PC-9 (cell line): ENCODE measurements at regions of chr15 and their contacts with region 1.

Region 1: DNA sequence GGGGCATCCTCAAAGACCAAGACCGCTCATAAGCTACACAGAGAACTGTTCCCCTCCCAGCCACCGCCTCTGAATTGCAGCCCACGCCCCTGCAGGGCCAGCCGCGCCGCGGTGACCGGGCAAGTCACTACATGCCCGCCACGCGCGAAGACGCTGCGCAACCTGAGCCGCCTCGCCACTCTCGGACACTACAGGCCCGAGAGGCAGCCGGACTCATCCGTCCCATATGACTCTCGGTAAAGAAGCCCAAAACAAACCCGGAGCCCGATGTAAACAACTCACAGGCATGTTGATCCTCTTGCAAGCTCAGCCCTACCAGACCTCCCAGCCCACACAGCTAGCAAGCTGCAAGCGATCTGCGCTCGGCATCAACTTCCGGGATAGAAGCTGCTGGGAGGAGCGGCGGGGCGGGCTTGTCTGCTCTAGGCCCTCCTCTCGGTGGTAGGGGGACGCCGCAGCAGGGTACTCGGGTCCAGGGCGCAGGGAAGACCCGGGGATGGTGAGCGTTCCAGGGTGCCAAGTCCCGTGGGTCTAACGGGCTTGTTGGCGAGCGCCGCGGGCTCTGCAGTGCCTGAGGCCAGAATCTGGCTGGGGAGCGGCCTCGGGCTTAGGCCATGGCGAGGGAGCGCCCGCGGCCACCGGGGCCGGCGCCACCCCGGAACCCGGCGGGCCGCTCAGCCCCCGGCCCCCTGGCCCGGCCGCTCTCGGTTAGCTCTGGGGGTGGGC is at the start of gene RPS27L:
- DNase-seq: peak; percentile 75 to 84
- H3K4me3 ChIP-seq: peak within 1 kb of the TSS; percentile 71
- H3K27ac ChIP-seq: peak within 1 kb of the TSS; percentile 61
- H3K4me1 ChIP-seq: peaks cover 13% of the 10 kb centered on the region
- H3K27me3 ChIP-seq: no peaks in the 10 kb centered on the region
- CTCF ChIP-seq: no peak
- total RNA-seq, gene RPS27L: 59.7 and 77.0 TPM in 2 replicates

Region 2: DNA sequence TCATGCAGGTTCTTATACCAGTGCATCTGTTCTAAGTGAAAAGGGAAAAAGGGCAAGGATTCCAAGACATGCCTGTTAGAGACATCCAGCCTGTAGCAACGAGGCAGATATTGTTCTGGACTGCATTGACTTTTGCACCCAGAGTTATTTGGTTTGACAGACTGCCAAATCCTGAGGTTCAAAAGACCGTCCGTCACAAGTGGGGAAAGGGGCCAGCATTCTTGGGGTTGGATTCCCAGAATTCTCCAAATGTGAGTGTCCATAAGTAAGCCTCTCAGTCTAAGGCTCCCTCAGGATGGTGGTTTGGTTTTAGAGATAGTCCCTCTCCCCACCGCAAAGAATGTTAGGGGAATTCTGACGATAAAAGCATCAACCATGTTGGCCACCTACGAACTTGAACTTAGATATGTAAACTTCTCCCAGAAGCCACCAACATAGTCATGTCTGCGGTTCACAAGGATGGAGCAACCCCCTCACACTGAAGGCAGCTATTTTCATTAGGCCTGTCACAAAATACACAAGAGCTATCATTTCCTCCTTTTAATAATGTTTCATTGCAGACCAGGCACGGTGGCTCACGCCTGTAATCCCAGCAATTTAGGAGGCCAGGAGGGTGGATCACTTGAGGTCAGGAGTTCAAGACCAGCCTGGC is 49.3 kb before region 1 on chr15:
- CTCF ChIA-PET with region 1: no interaction called
- POLR2A ChIA-PET with region 1: interaction called, 3 read pairs
- intact Hi-C with region 1: loop called (anchors 1 kb)
- DNase-seq: peak; percentile 80 to 86
- H3K4me3 ChIP-seq: no peak overlapping the region
- H3K27ac ChIP-seq: peak overlapping the region; percentile 32; the same call in 1 of the 2 replicates
- H3K4me1 ChIP-seq: peaks cover 8% of the 10 kb centered on the region; the same call in 1 of the 2 replicates
- H3K27me3 ChIP-seq: no peaks in the 10 kb centered on the region
- CTCF ChIP-seq: no peak

Region 3: DNA sequence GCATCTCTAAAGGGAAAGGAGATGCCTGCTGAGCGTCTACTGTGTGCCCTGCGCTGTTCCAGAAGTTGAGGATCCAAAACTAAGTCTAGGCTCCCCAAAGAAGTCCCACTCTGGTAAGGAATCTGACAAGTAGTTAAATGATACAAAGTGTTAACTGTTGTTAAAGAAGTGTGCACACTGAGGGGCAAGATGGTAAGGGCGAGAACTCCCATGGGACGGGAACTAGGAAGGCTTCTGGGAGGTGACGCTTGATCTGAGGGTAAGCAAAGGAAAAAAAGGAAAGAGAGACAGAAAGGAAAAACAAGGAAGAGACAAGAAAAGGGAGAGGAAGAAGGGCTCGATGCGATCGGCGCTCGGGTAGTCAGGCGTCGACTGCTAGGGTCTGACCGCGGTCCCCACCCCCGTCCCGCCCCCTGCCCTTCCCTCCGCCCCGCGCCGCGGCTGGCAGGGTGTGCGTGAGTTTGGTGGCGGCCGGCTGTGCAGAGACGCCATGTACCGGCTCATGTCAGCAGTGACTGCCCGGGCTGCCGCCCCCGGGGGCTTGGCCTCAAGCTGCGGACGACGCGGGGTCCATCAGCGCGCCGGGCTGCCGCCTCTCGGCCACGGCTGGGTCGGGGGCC is 35.8 kb before region 1 on chr15 and contains the start of gene LACTB:
- CTCF ChIA-PET with region 1: no interaction called
- POLR2A ChIA-PET with region 1: no interaction called
- intact Hi-C with region 1: loop called (anchors 2 kb)
- DNase-seq: peak; percentile 63 to 79
- H3K4me3 ChIP-seq: peak within 1 kb of the TSS; percentile 77
- H3K27ac ChIP-seq: peak within 1 kb of the TSS; percentile 28; the same call in 1 of the 2 replicates
- H3K4me1 ChIP-seq: no peaks in the 10 kb centered on the region; the same call in 1 of the 2 replicates
- H3K27me3 ChIP-seq: no peaks in the 10 kb centered on the region
- CTCF ChIP-seq: no peak
- total RNA-seq, gene LACTB: 13.4 and 17.1 TPM in 2 replicates

Region 4: DNA sequence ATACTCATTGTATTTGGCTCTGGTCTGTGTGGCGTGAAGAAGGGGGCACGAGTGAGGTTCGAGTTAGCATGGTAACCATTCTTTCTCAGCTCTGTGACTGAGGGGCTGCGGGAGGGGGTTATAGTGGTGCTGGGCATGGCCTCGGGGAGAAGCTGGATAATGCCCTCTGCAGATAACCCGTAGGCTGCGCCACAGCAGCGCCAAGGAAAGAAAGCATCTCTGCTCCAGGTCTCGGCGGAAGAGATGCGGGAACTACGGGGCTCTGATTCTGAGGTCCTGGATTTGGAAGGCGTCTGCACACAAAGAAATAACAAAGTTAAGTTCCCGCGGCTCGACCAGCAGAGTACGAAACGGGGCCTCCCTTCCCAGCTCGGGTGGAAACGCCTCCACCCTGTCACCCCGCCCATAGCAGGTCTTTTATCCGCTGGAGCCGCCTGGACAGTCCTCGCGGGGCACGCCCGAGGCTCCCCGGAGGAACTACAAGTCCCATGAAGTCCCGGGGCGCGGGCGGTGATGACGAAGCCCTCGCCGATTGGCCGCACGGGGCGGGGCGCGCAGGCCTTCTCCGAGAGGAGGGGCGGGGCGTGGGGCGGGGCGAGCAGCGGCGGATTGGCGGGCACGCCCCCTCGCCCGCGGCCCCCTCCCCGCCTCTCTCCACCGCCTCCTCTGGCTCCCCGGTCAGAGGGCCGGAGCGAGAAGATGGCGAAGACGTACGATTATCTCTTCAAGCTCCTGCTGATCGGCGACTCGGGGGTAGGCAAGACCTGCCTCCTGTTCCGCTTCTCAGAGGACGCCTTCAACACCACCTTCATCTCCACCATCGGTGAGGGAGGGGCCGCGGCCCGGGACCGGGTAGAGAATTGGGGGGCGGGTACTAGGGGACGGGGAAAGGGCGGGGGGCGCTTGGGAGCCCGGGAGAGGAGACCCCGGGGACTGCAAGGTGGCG is 31.9 kb after region 1 on chr15 and contains the start of gene RAB8B:
- CTCF ChIA-PET with region 1: no interaction called
- POLR2A ChIA-PET with region 1: no interaction called
- intact Hi-C with region 1: loop called (anchors 2 kb)
- DNase-seq: peak; percentile 82 to 97
- H3K4me3 ChIP-seq: peak within 1 kb of the TSS; percentile 63
- H3K27ac ChIP-seq: no peak within 1 kb of the TSS
- H3K4me1 ChIP-seq: peaks cover 36% of the 10 kb centered on the region
- H3K27me3 ChIP-seq: no peaks in the 10 kb centered on the region
- CTCF ChIP-seq: no peak
- total RNA-seq, gene RAB8B: 19.3 and 20.9 TPM in 2 replicates

Region 5: DNA sequence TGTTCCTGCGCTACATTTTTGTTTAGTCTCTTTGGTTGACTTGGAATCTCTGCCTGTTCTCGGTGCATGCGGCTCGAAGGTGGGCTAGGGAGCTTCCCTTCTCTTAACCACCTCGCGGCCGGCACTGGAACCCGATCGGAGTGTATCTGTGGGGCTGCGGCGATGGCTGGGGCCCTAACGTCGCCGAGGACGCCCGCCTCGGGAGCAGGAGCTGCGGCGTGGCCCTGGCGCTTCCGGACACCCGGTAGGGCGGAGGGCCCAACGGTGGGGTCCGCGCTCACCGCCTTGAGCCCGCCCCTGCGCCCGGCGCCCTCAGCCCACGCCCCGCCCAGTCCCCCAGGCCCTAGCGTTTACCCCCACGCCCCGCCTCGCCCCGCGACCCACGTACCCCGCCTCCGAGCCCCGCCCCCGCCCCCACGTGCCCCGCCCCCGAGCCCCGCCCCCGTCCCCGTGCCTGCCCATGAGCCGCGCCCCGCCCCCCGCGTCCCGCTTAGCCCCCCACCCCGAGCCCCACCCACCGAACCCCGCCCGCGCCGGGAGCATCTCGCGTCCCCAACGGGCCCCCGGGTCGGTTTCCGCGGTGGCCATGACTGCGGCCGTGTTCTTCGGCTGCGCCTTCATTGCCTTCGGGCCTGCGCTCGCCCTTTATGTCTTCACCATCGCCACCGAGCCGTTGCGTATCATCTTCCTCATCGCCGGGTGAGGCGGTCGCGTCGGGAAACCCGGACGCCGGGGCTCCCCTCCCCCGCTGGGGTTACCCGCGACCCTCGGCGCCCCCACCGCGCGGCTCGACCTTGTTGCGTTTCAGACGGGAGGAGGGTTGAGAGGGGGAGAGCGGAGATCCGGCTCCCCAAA is 120.0 kb after region 1 on chr15 and contains the start of gene APH1B:
- CTCF ChIA-PET with region 1: no interaction called
- POLR2A ChIA-PET with region 1: no interaction called
- intact Hi-C with region 1: loop called (anchors 1 kb)
- DNase-seq: peak; percentile 40 to 76
- H3K4me3 ChIP-seq: peak within 1 kb of the TSS; percentile 82
- H3K27ac ChIP-seq: no peak within 1 kb of the TSS
- H3K4me1 ChIP-seq: peaks cover 16% of the 10 kb centered on the region
- H3K27me3 ChIP-seq: no peaks in the 10 kb centered on the region
- CTCF ChIP-seq: no peak
- total RNA-seq, gene APH1B: 4.9 and 5.8 TPM in 2 replicates

Region 6: DNA sequence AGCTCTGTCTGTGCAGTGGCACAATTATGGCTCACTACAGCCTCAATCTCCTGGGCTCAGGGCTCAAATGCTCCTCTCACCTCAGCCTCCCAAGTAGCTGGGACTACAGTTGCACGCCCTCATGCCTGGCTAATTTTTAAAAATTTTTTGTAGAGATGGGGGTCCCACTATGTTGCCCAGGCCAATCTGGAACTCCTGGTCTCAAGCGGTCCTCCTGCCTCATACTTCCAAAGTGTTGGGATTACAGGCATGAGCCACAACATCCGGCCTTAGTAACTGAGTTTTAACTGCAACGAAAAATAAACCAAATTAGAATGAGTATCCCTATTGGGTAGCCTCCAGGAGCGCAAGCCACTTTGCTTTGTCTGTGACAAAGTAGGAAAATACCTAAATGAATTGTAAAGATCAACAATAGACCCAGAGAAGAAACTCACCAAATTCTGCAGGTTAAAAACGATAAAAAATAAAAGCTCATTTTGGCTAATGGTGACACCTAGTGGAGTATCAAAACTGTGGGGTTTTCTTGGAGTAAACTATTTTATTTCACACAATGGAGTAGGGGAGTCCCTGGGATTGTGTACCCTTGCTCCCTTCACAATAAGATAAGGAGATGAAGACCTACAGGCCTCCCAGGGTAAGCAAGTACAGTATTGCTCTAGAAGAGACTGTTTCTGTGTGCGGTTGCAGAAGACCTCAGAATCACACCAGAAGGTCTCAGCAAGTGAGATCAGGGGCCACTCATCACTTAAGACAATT is 245.4 kb after region 1 on chr15:
- CTCF ChIA-PET with region 1: no interaction called
- POLR2A ChIA-PET with region 1: no interaction called
- intact Hi-C with region 1: loop called (anchors 10 kb)
- DNase-seq: no peak
- H3K4me3 ChIP-seq: no peak overlapping the region
- H3K27ac ChIP-seq: no peak overlapping the region
- H3K4me1 ChIP-seq: no peaks in the 10 kb centered on the region
- H3K27me3 ChIP-seq: no peaks in the 10 kb centered on the region
- CTCF ChIP-seq: peak; percentile 70